PC-9 (cell line): ENCODE measurements at regions of chrX and their contacts with region 1.

Region 1: DNA sequence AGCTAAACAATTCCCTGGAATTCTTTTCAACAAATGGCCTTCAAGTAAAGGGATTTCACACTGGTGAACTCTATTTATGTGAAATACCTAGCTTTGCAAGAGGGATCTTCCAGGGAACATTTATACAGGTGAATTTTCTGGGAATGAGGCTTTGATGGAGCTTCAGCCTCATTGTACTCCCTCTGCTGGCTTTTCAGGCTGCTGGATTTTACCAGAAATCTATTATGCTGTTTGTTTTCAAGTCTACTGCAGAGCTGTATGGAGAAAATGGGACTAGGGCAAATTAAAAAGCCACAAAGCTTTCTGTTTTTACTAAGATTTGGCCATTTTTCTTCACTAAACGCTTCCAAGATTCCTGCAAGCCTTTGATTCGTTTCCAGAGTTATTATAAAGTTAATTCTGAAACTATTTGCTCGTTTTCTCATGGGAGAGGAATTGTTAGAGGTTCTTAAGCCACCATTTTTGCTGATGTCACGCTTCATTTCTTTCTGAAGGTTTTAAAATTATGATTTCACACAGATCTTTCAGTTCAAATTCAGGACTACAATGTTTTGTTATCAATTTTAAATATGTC is 31.6 kb downstream of the KDM6A start:
- DNase-seq: no peak
- H3K4me3 ChIP-seq: no peak overlapping the region
- H3K27ac ChIP-seq: no peak overlapping the region
- H3K4me1 ChIP-seq: no peaks in the 10 kb centered on the region
- H3K27me3 ChIP-seq: no peaks in the 10 kb centered on the region
- CTCF ChIP-seq: no peak

Region 2: GRCh38 chrX:45126158-45126557 is 221.5 kb after region 1 on chrX:
- CTCF ChIA-PET with region 1: no interaction called
- POLR2A ChIA-PET with region 1: interaction called, 11 read pairs
- intact Hi-C with region 1: no loop called
- DNase-seq: no peak
- H3K4me3 ChIP-seq: no peak overlapping the region
- H3K27ac ChIP-seq: no peak overlapping the region
- H3K4me1 ChIP-seq: no peaks in the 10 kb centered on the region
- H3K27me3 ChIP-seq: no peaks in the 10 kb centered on the region
- CTCF ChIP-seq: no peak